Activated CD8-positive, alpha-beta T cell treated with anti-CD3 and anti-CD28 coated beads for 36 hours (primary cell): ENCODE measurements at regions of chr6 and their contacts with region 1.

Region 1: DNA sequence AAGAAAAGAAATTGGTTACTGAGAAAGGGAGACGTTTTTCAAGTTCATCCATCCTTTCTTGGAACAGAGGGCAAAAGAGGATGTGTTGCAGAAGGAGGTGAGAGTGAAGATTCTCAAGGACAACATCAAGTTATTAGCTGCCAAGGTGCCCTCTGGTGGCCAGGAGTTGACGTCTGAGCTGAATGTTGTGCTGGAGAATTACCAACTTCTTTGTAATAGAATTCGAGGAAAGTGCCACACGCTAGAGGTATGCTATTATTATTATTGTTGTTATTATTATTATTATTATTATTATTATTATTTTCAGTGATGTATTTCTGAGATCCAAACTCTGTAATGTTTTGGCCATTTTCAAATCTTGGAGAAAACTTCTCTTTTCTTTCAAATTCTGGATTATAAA is 197.0 kb downstream of the UTRN start:
- DNase-seq: peak; percentile 87
- ATAC-seq: peak; percentile 83
- H3K4me3 Mint-ChIP-seq: no peak overlapping the region
- H3K27ac Mint-ChIP-seq: peak overlapping the region; percentile 43
- H3K4me1 Mint-ChIP-seq: peaks cover 21% of the 10 kb centered on the region
- H3K27me3 Mint-ChIP-seq: no peaks in the 10 kb centered on the region
- CTCF ChIP-seq: peak; percentile 71

Region 2: DNA sequence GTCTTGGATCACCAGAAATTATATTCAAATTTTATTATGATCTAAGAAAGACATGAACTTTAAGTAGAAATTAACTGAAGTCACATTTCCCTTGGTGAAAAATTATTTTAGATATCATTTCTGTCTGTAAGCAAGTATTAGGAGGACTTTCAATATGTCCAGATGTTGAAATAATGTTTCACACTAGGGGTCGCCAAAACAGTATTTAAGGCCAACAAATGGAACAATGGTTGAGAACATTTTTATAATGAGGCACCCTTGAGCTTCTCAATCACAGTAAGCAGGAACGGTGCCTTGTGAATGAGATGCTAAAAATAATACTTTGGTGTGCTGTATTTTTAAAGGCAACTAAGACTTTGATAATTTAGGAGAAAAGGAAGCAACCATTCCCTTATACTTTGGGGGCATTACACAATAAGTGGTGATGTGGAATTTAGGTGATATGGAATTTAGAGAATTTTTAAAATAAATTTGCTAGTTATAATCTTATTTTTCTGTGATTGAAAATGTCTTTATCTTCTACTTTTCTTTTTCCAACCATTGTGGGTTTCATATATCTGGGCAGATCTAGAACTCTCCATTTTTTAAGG is 377.1 kb before region 1 on chr6:
- CTCF ChIA-PET with region 1: interaction called, 5 read pairs
- POLR2A ChIA-PET with region 1: no interaction called
- intact Hi-C with region 1: loop called (anchors 5 kb)
- DNase-seq: peak; percentile 45
- ATAC-seq: peak; percentile 86
- H3K4me3 Mint-ChIP-seq: no peak overlapping the region
- H3K27ac Mint-ChIP-seq: no peak overlapping the region
- H3K4me1 Mint-ChIP-seq: peaks cover 11% of the 10 kb centered on the region
- H3K27me3 Mint-ChIP-seq: no peaks in the 10 kb centered on the region
- CTCF ChIP-seq: peak; percentile 84

Region 3: GRCh38 chr6:144349690-144350527 is 132.2 kb before region 1 on chr6:
- CTCF ChIA-PET with region 1: no interaction called
- POLR2A ChIA-PET with region 1: interaction called, 3 read pairs
- intact Hi-C with region 1: loop called (anchors 5 kb)
- DNase-seq: no peak
- ATAC-seq: peak; percentile 54
- H3K4me3 Mint-ChIP-seq: peak overlapping the region; percentile 70
- H3K27ac Mint-ChIP-seq: peak overlapping the region; percentile 92
- H3K4me1 Mint-ChIP-seq: peaks cover 81% of the 10 kb centered on the region
- H3K27me3 Mint-ChIP-seq: no peaks in the 10 kb centered on the region
- CTCF ChIP-seq: no peak

Region 4: GRCh38 chr6:144460327-144461095 is 21.6 kb before region 1 on chr6:
- CTCF ChIA-PET with region 1: interaction called, 14 read pairs
- POLR2A ChIA-PET with region 1: no interaction called
- intact Hi-C with region 1: no loop called
- DNase-seq: no peak
- ATAC-seq: peak; percentile 86
- H3K4me3 Mint-ChIP-seq: peak overlapping the region; percentile 20
- H3K27ac Mint-ChIP-seq: peak overlapping the region; percentile 85
- H3K4me1 Mint-ChIP-seq: peaks cover 22% of the 10 kb centered on the region
- H3K27me3 Mint-ChIP-seq: no peaks in the 10 kb centered on the region
- CTCF ChIP-seq: no peak

Region 5: GRCh38 chr6:144469144-144469575 is 13.0 kb before region 1 on chr6:
- CTCF ChIA-PET with region 1: interaction called, 13 read pairs
- POLR2A ChIA-PET with region 1: interaction called, 6 read pairs
- intact Hi-C with region 1: no loop called
- DNase-seq: peak; percentile 46
- ATAC-seq: peak; percentile 83
- H3K4me3 Mint-ChIP-seq: peak overlapping the region; percentile 65
- H3K27ac Mint-ChIP-seq: peak overlapping the region; percentile 88
- H3K4me1 Mint-ChIP-seq: peaks cover 23% of the 10 kb centered on the region
- H3K27me3 Mint-ChIP-seq: no peaks in the 10 kb centered on the region
- CTCF ChIP-seq: no peak

Region 6: GRCh38 chr6:144493035-144493910 is 11.1 kb after region 1 on chr6:
- CTCF ChIA-PET with region 1: interaction called, 15 read pairs
- POLR2A ChIA-PET with region 1: no interaction called
- intact Hi-C with region 1: no loop called
- DNase-seq: no peak
- ATAC-seq: no peak
- H3K4me3 Mint-ChIP-seq: no peak overlapping the region
- H3K27ac Mint-ChIP-seq: no peak overlapping the region
- H3K4me1 Mint-ChIP-seq: peaks cover 7% of the 10 kb centered on the region
- H3K27me3 Mint-ChIP-seq: no peaks in the 10 kb centered on the region
- CTCF ChIP-seq: no peak